ENCODE measurements at regions of chr4 and their contacts with region 1.

Region 1: GRCh38 chr4:76430519-76431388 is 4.3 kb upstream of the SHROOM3 start:
- DNase-seq: no peak

Region 2: GRCh38 chr4:76179398-76180318 is 251.1 kb before region 1 on chr4:
- intact Hi-C with region 1: loop called (anchors 5 kb)
- DNase-seq: peak; percentile 85

Region 3: GRCh38 chr4:76233957-76234678 is 196.6 kb before region 1 on chr4:
- intact Hi-C with region 1: no loop called
- DNase-seq: no peak

Region 4: DNA sequence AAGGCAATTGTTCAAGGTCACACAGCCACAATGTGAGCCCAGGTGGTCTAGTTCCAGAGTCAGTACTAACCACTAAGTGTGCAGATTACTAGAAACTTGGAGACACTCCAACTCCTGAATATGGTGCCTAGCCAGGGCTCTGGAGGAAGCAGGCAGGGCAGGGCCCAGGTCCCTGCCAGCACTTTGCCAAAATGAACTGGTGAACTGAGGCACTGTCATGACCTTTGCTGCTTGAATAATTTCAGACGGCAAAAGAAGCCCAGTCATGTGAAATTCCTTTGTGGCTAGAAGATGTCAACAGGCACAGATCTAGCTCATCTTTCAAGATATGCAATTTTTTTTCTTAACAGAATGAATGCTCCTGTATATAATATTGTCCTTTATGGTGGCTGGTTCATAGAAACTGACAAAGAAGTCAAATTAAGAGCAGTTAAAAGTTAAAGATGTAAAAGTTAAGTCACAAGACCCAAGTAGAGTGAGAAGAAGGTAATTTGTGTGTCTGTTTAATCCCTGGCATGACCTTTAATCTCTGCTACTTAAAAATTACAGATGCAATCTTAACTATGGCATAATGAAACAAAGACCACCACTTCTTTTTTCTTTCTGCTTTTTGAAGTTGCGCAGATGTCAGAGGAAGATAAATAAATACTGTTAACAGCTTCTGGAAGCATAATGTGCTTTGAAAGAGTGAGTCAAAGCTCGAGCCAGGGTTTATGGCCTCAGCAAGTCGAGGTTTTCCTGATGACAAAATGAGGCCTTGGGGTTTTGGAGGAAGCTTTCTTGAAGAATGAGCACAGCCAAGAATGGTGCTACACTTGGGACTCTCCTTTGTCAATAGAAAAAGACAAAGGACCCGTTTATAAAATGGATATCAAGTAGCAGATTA is 58.4 kb after region 1 on chr4:
- intact Hi-C with region 1: no loop called
- DNase-seq: no peak

Region 5: GRCh38 chr4:76504613-76505465 is 74.1 kb after region 1 on chr4:
- intact Hi-C with region 1: loop called (anchors 2 kb)
- DNase-seq: no peak

Region 6: DNA sequence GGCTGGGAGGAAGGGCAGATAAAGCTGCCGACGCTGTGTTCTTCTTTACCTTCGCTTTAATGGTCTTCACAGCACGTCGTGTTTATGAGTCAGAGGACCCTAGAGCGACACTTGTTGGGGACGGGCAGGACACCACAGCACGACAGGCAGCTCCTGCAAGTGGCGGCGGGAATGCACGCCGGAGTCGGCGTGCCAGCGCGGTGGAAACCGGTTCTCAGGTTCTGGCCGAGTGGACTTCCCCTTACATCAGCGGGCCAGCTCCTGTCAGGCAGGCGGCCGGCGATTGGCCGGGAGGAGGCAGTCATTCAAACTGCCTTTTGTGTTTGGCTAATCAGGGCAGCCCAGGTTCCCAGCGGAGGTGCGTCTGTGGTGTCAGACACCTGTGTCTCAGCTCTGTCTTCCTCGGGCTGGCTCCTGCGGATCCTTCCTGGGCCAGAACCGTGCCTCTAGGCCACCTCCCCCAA is 155.2 kb after region 1 on chr4:
- intact Hi-C with region 1: loop called (anchors 5 kb)
- DNase-seq: peak; percentile 88

Region 7: DNA sequence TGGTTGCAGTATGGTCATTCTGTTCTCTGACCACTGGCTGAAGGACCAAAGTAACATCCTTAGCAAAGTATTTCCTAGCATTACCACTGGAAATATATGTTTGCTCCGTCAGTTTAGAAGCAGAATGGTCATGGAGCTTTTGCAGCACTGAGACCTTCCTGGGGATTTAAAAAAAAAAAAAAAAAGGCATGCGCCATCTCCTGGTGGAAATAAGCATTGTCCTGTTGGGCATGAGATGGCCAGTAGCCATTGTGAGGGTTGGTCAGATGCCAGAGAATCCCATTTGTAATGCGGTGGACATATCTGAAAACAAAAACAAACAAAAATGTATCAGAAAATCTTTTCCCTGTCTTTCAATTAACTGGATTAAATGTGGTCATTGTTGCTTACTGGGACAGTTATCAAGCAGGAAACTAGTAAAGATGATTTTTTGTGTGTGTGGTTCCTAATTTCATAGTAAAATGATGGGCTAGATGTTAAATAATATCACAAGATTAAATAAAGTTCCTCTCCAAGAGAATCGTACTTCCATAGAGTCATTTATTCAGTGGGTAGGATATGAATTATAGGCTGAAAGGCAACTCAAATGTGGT is 327.6 kb after region 1 on chr4:
- intact Hi-C with region 1: loop called (anchors 5 kb)
- DNase-seq: no peak

Region 8: DNA sequence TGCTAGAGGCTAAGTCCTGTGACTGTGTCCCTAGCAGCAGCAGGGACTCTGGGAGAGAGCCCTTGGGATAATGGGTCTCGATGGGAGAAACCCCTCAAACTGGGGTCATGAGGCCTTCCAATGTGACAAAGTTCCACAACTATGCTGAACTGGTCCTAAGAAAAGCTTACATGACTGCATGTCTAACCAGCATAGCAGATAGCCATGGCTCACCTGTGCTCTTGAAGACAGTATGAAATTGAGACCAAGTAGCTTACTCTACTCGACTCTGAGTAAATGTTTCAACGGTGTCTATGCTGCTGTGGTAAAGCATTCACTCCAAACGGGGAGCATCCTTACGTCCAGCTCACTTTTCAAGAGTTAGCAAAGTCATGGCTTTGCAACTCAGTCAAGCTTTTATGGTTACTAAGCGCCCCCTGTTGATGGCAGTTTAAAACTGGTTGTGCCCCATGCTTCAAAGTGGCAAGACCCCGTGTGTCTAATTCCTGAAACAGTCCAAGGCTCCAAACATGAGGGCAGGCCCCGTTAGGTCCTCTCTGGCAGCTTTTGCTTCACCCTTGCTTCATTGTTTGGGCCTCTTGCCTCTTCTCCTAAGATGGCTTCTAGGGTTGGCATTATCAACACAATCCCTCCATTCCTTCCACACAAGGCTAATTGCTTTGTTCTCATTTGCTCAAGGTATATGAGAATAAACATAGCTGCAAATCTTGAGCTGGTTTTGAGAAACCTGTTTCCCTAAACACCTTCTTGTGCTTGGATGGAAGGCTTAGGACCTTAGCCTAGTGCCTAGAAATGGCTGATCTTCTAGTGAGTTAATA is 772.8 kb after region 1 on chr4:
- intact Hi-C with region 1: loop called (anchors 10 kb)
- DNase-seq: no peak